Activated CD4-positive, alpha-beta T cell treated with anti-CD3 and anti-CD28 coated beads for 36 hours (primary cell): ENCODE measurements at regions of chr11 and their contacts with region 1.

Region 1: DNA sequence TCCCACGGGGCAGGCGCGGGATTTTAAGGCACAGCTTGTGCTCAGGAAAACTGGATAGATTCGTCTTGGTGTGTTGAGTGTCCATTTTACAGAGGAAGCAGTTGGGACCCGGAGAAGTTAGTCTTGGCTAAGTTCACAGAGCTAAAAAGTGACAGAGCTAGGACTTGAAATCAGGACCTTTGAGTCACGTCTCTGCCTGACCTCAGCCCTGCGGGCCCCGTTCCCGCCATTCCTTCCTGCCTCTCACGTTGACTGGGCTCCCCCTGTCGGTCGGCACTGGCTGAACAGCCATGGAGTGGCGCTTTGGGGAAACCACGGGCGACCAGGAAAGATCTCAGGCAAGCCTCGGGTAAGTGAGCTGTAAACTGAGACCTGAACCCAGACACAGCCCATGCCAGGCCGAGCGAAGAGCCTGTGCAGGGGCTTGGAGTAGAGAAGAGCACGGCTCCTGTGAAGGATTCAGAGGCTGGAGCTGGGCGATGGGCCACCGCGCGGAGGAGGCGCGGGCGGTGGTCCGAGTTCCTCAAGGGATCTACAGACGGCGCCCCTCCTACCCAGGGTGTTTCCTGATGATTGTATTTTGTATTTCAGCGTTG is 54.1 kb downstream of the WNT11 start:
- DNase-seq: peak; percentile 96
- ATAC-seq: peak; percentile 98
- H3K4me3 Mint-ChIP-seq: peak overlapping the region; percentile 57
- H3K27ac Mint-ChIP-seq: peak overlapping the region; percentile 59
- H3K4me1 Mint-ChIP-seq: peaks cover 18% of the 10 kb centered on the region
- H3K27me3 Mint-ChIP-seq: peaks cover 16% of the 10 kb centered on the region

Region 2: DNA sequence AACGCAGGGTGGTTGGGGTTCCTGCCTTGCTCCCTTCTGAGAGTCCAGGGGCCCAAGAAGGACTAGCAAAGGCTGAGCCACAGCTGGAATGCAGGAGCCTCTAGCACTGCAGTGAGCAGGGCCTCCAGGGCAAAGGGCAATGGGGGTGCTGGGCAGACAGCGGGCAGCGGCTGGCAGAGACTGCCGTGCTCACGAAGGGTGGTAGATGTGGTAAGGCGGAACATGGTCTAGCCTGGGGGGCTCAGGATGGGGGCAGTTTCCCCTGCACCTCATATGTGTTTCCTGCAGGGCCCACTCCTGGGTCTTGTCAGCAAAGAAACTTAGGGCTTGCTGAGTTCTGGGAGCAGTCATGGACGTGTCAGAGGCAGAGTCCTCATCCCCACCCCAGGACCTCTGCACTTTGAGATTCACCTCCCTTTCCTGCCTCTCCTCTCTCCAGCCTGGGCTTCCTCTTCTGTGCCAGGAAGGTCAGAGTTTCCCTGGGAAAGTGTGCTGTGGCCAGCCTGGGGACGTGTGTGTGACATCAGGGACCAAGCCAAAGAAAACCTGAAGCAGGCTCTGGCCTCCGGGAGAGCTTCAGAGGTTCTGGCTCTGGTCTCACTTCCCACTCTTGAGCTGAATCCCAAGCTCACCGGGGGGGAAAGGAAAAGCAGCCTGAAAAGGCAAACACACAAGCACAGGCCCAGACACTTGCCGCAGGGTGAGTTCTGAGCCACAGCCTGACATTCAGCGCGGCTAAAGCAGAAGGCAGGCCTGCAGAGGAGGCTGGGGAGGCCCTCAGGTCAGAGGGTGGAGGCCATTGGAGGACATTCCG is 430.1 kb before region 1 on chr11:
- CTCF ChIA-PET with region 1: interaction called, 4 read pairs
- POLR2A ChIA-PET with region 1: no interaction called
- intact Hi-C with region 1: loop called in 1 of 2 experiments (anchors 2 kb)
- DNase-seq: no peak
- ATAC-seq: no peak
- H3K4me3 Mint-ChIP-seq: no peak overlapping the region
- H3K27ac Mint-ChIP-seq: no peak overlapping the region
- H3K4me1 Mint-ChIP-seq: no peaks in the 10 kb centered on the region
- H3K27me3 Mint-ChIP-seq: no peaks in the 10 kb centered on the region

Region 3: GRCh38 chr11:75733431-75734107 is 418.6 kb before region 1 on chr11:
- CTCF ChIA-PET with region 1: no interaction called
- POLR2A ChIA-PET with region 1: no interaction called
- intact Hi-C with region 1: no loop called
- DNase-seq: peak; percentile 17
- ATAC-seq: peak; percentile 94
- H3K4me3 Mint-ChIP-seq: no peak overlapping the region
- H3K27ac Mint-ChIP-seq: no peak overlapping the region
- H3K4me1 Mint-ChIP-seq: no peaks in the 10 kb centered on the region
- H3K27me3 Mint-ChIP-seq: no peaks in the 10 kb centered on the region

Region 4: GRCh38 chr11:75826461-75827230 is 325.5 kb before region 1 on chr11:
- CTCF ChIA-PET with region 1: interaction called, 10 read pairs
- POLR2A ChIA-PET with region 1: no interaction called
- intact Hi-C with region 1: no loop called
- DNase-seq: no peak
- ATAC-seq: no peak
- H3K4me3 Mint-ChIP-seq: no peak overlapping the region
- H3K27ac Mint-ChIP-seq: no peak overlapping the region
- H3K4me1 Mint-ChIP-seq: peaks cover 19% of the 10 kb centered on the region
- H3K27me3 Mint-ChIP-seq: no peaks in the 10 kb centered on the region

Region 5: DNA sequence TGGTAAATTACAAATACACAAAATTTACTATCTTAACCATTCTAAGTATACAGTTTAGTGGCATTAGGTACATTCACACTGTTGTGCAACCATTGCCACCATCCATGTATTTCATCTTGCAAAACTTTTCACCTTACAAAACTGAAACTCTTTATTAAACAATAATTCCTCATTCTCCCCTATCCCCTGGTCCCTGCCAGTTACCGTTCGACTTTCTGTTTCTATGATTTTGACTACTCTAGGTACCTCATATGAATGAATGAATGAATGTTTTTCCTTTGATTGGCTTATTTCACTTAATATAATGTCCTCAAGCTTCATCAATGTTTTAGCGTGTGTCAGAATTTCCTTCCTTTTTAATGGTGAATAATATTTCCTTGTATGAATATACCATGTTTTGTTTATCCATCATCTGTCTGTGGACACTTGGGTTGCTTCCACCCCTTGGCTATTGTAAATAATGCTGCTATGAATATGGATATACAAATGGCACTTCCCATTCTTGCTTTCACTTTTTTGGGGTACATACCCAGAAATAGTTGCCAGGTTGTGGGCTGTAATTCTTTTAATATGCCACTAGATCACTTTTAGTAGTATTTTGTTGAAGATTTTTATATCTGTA is 244.2 kb before region 1 on chr11:
- CTCF ChIA-PET with region 1: interaction called, 33 read pairs
- POLR2A ChIA-PET with region 1: no interaction called
- intact Hi-C with region 1: no loop called
- DNase-seq: no peak
- ATAC-seq: no peak
- H3K4me3 Mint-ChIP-seq: no peak overlapping the region
- H3K27ac Mint-ChIP-seq: no peak overlapping the region
- H3K4me1 Mint-ChIP-seq: peaks cover 27% of the 10 kb centered on the region
- H3K27me3 Mint-ChIP-seq: no peaks in the 10 kb centered on the region

Region 6: DNA sequence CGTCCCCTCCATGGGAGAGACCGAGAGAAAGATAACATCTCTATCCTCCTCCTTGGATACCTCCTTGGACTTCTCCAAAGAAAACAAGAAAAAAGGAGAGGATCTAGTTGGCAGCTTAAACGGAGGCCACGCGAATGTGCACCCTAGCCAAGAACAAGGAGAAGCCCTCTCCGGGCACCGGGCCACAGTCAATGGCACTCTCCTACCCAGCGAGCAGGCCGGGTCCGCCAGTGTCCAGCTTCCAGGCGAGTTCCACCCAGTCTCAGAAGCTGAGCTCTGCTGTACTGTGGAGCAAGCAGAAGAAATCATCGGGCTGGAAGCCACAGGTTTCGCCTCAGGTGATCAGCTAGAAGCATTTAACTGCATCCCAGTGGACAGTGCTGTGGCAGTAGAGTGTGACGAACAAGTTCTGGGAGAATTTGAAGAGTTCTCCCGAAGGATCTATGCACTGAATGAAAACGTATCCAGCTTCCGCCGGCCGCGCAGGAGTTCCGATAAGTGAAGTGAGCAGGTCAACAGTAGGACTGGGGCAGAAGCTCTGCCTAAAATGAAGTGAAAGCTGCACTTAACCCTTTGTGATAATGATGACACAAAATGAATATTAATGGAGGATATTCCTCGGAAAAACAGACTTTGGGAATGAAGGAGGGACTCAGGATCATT is 11.1 kb before region 1 on chr11:
- CTCF ChIA-PET with region 1: interaction called, 13 read pairs
- POLR2A ChIA-PET with region 1: interaction called, 6 read pairs
- intact Hi-C with region 1: no loop called
- DNase-seq: no peak
- ATAC-seq: no peak
- H3K4me3 Mint-ChIP-seq: no peak overlapping the region
- H3K27ac Mint-ChIP-seq: no peak overlapping the region
- H3K4me1 Mint-ChIP-seq: no peaks in the 10 kb centered on the region
- H3K27me3 Mint-ChIP-seq: no peaks in the 10 kb centered on the region

Region 7: DNA sequence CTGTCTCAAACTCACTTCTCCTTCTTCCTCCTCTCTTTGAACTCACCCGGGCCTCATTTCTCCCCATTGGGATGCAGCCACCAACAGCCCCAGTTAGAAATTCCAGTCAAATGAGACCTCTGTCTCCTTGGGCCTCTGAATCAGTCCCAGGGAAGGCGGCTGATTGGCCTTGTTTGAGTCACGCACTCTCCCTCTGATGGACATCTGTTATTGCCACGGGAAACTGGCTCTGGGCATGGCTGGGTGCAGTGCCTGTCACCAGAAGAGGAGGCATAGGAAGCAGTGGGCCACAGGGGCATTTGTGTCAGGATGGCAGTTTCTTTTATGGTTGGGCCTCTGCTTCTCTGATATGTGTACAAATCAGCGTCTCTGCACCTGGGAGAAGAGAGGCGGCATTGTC is 63.8 kb after region 1 on chr11:
- CTCF ChIA-PET with region 1: no interaction called
- POLR2A ChIA-PET with region 1: no interaction called
- intact Hi-C with region 1: no loop called
- DNase-seq: no peak
- ATAC-seq: no peak
- H3K4me3 Mint-ChIP-seq: no peak overlapping the region
- H3K27ac Mint-ChIP-seq: no peak overlapping the region
- H3K4me1 Mint-ChIP-seq: no peaks in the 10 kb centered on the region
- H3K27me3 Mint-ChIP-seq: peaks cover 16% of the 10 kb centered on the region